Activated CD8-positive, alpha-beta T cell treated with anti-CD3 and anti-CD28 coated beads, Interleukin-2, amount 10 ng/mL, durations not matched to agents 7 days and 5 days (primary cell): ENCODE measurements at regions of chr11 and their contacts with region 1.

Region 1: GRCh38 chr11:123494195-123495050 is 64.4 kb downstream of the GRAMD1B start:
- DNase-seq: no peak
- ATAC-seq: no peak
- H3K4me3 Mint-ChIP-seq: no peak overlapping the region
- H3K27ac Mint-ChIP-seq: no peak overlapping the region
- H3K4me1 Mint-ChIP-seq: peaks cover 15% of the 10 kb centered on the region
- H3K27me3 Mint-ChIP-seq: no peaks in the 10 kb centered on the region

Region 2: GRCh38 chr11:123338330-123339005 is 156.0 kb before region 1 on chr11:
- CTCF ChIA-PET with region 1: no interaction called
- POLR2A ChIA-PET with region 1: no interaction called
- DNase-seq: no peak
- ATAC-seq: no peak
- H3K4me3 Mint-ChIP-seq: no peak overlapping the region
- H3K27ac Mint-ChIP-seq: no peak overlapping the region
- H3K4me1 Mint-ChIP-seq: no peaks in the 10 kb centered on the region
- H3K27me3 Mint-ChIP-seq: peaks cover 22% of the 10 kb centered on the region

Region 3: GRCh38 chr11:123511037-123511870 is 16.8 kb after region 1 on chr11:
- CTCF ChIA-PET with region 1: interaction called, 10 read pairs
- POLR2A ChIA-PET with region 1: no interaction called
- DNase-seq: peak; percentile 79
- ATAC-seq: peak; percentile 97
- H3K4me3 Mint-ChIP-seq: no peak overlapping the region
- H3K27ac Mint-ChIP-seq: peak overlapping the region; percentile 44
- H3K4me1 Mint-ChIP-seq: peaks cover 21% of the 10 kb centered on the region
- H3K27me3 Mint-ChIP-seq: no peaks in the 10 kb centered on the region